Activated naive CD4-positive, alpha-beta T cell treated with anti-CD3 and anti-CD28 coated beads for 36 hours (primary cell): ENCODE measurements at regions of chr19 and their contacts with region 1.

Region 1: DNA sequence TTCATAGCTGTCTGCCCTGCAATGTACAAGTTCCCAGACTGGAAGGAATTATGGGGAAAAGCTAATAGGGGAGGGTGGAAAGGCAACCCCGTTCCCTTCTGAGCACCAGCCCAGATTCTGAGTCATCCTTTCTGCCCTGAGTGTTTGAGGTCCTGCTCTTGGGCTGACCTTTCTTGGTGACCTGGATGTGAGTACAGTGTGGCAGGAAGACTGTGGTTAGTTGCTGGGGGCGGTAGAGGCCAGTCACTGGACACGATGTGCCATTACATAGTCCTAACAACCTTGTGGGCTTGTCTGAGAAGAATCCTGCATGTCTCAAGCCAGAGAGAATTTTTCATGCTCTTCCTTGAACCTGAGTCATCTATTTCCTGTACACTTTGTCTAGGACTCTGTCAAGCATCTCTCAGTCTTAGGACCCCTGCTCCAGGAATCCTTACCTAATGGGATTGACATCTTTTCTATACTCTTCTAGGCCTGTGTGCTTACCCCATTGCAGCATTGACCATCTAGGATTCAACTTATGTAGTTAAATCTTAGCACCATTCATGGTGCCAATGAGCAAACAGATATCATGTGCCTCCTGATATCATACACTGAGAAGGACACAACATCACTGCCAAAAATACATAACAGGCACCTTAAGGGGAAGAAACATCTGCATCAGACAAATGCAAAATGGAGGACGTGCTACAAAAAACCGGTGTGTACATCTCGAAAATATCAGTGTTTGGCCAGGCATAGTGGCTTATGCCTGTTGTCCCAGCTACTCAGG is 8.1 kb upstream of the ANGPTL4 start:
- DNase-seq: no peak
- H3K4me3 Mint-ChIP-seq: no peak overlapping the region
- H3K27ac Mint-ChIP-seq: no peak overlapping the region
- H3K4me1 Mint-ChIP-seq: no peaks in the 10 kb centered on the region
- H3K27me3 Mint-ChIP-seq: peaks cover 10% of the 10 kb centered on the region

Region 2: DNA sequence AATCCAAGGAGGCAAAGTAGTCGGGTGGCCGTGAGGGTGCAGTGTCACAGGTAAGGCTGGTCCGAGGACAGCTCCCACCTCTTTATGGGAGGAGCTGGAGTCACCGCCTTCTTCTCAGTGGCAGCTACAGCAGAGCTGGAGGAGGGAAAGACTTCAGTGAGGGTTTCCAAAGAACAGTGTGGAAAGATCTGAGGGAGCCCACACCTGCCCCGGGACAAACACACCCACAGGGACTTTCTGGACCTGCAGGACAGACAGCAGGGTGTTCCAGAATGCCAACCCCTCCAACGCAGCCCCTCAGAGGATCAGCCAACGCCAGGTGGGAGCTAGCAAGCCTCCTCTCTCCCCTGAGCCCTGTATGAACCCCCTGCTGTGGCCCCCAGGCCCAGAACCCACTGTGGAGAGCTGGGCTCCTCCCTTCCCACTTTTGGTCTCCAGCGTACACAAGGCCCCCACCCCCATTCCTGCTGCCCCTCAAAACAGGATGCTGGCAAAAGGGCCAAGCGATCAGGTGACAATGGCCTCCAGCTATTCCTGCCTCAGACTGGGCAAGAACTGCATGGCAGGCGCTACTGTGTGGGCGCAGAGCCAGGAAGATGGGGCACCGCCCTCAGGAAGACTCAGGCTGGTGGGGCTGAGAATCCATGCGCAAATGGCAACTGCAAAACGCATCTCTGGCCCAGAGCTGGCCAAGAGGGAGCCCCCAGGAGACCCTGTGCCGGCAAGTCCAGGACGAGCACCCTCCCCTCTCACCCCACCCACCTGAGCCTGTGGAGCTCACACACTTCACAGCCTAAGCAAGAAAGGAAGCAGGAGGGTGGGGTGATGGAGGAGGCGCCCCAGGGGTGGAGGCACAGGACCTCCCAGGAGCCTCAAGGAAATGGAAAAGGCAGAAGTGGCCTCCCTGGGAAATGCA is 44.1 kb before region 1 on chr19:
- CTCF ChIA-PET with region 1: no interaction called
- intact Hi-C with region 1: no loop called
- DNase-seq: peak; percentile 2
- H3K4me3 Mint-ChIP-seq: no peak overlapping the region
- H3K27ac Mint-ChIP-seq: no peak overlapping the region
- H3K4me1 Mint-ChIP-seq: peaks cover 25% of the 10 kb centered on the region
- H3K27me3 Mint-ChIP-seq: no peaks in the 10 kb centered on the region

Region 3: DNA sequence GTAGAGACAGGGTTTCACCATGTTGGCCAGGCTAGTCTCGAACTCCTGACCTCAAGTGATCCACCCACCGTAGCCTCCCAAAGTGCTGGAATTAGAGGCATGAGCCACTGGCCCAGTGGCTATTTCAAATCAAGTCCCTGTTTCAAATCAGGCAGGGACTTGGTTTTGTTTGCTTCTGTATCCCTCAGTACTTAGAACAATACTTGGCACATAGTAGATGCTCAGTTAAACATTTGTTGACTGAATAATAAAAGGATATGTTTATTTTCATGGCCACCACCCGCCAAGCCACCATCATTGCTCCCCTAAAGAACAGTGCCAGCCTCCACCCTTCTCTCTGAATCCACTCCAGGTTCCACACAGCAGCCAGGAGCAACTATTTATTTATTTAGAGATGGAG is 30.4 kb before region 1 on chr19:
- CTCF ChIA-PET with region 1: no interaction called
- intact Hi-C with region 1: no loop called
- DNase-seq: no peak
- H3K4me3 Mint-ChIP-seq: no peak overlapping the region
- H3K27ac Mint-ChIP-seq: no peak overlapping the region
- H3K4me1 Mint-ChIP-seq: peaks cover 16% of the 10 kb centered on the region
- H3K27me3 Mint-ChIP-seq: no peaks in the 10 kb centered on the region

Region 4: DNA sequence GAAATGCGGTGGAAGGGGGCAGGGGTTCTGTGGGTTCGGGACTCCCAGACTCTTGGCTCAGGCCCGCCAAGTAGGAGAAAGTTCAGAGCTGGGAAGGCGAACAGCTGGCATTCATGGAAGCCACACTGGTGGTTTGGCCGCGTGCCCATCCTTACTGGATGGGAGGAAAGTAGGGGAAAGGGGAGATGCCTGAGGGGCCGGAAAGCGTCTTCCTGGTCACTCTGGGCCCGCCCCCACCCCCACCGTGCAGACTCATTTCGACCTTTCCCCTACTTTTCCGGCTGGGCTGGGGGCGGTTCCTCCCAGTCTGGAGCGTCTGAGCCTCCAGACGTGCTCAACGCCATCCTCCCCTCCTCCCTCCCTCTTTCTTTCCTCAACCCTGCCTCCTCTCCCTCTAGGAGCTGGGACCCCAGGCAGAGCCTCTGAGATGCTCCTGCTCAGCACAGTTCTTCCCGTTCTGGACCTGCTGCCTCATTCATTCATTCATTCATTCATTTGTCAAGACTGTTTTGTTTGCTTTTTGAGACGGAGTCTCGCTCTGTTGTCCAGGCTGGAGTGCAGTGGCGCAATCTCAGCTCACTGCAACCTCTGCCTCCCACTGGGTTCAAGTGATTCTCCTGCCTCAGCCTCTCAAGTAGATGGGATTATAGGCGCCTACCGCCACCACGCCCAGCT is 11.6 kb after region 1 on chr19:
- CTCF ChIA-PET with region 1: interaction called, 18 read pairs
- intact Hi-C with region 1: no loop called
- DNase-seq: no peak
- H3K4me3 Mint-ChIP-seq: no peak overlapping the region
- H3K27ac Mint-ChIP-seq: no peak overlapping the region
- H3K4me1 Mint-ChIP-seq: peaks cover 12% of the 10 kb centered on the region
- H3K27me3 Mint-ChIP-seq: peaks cover 38% of the 10 kb centered on the region

Region 5: GRCh38 chr19:8396563-8397203 is 40.9 kb after region 1 on chr19:
- CTCF ChIA-PET with region 1: interaction called, 41 read pairs
- intact Hi-C with region 1: loop called (anchors 1 kb)
- DNase-seq: peak; percentile 80
- H3K4me3 Mint-ChIP-seq: no peak overlapping the region
- H3K27ac Mint-ChIP-seq: no peak overlapping the region
- H3K4me1 Mint-ChIP-seq: peaks cover 29% of the 10 kb centered on the region
- H3K27me3 Mint-ChIP-seq: no peaks in the 10 kb centered on the region

Region 6: GRCh38 chr19:8456064-8456463 is 100.2 kb after region 1 on chr19:
- CTCF ChIA-PET with region 1: interaction called, 10 read pairs
- intact Hi-C with region 1: no loop called
- DNase-seq: no peak
- H3K4me3 Mint-ChIP-seq: no peak overlapping the region
- H3K27ac Mint-ChIP-seq: no peak overlapping the region
- H3K4me1 Mint-ChIP-seq: peaks cover 90% of the 10 kb centered on the region
- H3K27me3 Mint-ChIP-seq: no peaks in the 10 kb centered on the region

Region 7: GRCh38 chr19:8641908-8642547 is 286.2 kb after region 1 on chr19:
- CTCF ChIA-PET with region 1: interaction called, 3 read pairs
- intact Hi-C with region 1: loop called (anchors 1 kb)
- DNase-seq: peak; percentile 10
- H3K4me3 Mint-ChIP-seq: no peak overlapping the region
- H3K27ac Mint-ChIP-seq: no peak overlapping the region
- H3K4me1 Mint-ChIP-seq: peaks cover 4% of the 10 kb centered on the region
- H3K27me3 Mint-ChIP-seq: peaks cover 9% of the 10 kb centered on the region

Region 8: DNA sequence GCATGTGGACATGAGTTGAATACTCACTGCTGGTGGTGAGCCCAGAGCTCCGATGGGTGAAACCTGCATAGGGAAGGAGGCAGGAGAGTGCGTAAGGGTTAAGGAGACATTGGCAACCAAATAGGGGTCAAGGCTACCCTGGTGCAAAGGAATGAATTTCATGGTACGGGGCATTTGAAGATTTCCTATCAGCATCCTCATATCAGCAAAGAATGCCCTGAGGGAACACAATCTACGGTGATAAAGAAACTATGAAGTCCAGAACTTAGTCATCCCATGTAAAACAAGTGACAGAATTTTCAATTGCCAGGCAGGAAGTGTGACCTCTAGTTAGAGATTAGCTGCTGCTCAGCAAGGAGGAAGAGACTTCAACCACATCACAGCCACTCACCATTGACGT is 541.3 kb after region 1 on chr19:
- CTCF ChIA-PET with region 1: no interaction called
- intact Hi-C with region 1: no loop called
- DNase-seq: no peak
- H3K4me3 Mint-ChIP-seq: no peak overlapping the region
- H3K27ac Mint-ChIP-seq: no peak overlapping the region
- H3K4me1 Mint-ChIP-seq: no peaks in the 10 kb centered on the region
- H3K27me3 Mint-ChIP-seq: no peaks in the 10 kb centered on the region